ENCODE measurements at regions of chr7 and their contacts with region 1.

Region 1: DNA sequence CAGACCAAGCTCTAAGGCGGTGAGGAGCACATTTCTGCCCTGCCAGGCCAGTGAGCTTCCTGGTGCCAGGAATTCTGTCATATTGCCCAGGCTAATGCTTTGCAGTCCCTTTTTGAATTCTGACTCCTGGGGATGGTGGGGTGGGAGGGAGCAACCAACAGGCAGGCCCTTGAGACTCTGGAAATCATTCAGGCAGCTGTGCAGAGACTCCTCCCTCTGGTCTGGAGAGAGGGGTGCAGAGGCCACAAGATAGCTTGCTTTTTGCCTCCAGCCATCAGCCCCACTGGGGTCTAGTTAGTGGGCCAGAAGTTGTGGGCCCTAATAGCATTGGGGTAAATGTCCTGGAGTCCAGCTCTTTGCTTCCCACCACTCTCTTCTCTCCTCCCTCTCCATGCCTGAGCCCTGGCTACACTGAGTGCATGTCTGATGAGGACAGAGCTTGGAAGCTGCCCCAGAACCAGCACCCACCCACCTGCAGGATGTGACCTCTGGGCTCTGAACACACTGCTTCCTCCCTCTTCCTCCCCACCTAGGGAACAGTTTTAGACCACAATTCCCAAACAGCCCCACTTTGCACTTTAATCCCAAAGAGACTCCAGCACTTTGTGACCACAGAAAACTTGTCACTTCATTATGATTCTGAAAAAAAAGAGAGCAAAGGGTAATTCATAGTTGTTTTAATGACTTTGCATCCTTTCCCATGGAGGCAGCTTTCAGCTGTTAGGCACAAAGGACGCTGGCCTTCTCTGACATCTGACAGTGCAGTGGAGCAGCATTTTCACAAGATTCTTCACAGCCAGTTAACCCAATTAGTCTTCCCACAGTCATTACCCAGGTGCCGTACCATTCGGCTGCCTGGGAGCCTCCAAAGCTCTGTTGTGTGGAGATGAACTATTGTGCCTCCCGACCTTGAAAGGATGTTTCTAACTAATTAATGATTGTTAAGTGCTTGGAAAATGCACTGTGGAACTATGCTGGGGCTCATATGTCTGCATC is 262.5 kb downstream of the TRIL start:
- DNase-seq: no peak
- ATAC-seq: no peak
- H3K4me3 ChIP-seq: no peak overlapping the region
- H3K27ac ChIP-seq: no peak overlapping the region
- H3K4me1 ChIP-seq: no peaks in the 10 kb centered on the region
- H3K27me3 ChIP-seq: no peaks in the 10 kb centered on the region
- CTCF ChIP-seq: no peak

Region 2: DNA sequence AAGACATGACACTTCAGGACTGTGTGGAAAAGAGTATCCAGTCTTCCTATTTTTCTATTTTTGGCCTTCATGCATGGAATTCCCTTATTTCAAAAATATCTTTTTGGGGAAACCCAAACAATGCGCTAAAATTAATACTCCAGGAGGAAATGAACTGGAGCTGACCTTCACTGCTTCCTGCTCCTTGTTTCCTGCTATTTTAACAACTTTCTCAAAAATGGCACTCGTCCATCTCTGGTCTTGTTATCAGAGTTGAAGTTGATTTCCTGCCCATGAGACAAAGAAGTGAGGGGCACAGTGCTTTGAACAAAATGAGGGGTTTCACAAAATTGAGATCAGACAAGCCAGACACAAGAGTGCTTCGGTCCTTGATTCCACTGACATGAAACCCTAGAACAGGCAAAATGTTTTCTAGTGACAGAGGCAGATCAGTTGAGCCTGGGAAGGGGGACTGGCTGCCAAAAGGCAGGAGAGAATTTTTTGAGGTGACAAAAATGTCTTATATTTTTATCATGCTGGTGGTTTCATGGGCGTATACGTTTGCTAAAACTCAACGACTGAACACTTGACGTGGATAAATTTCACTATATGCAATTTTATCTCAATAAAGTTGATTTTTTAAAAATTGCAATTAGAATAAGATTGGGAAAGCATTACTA is 90.0 kb before region 1 on chr7:
- CTCF ChIA-PET with region 1: no interaction called
- POLR2A ChIA-PET with region 1: no interaction called
- intact Hi-C with region 1: no loop called
- DNase-seq: no peak
- ATAC-seq: no peak
- H3K4me3 ChIP-seq: no peak overlapping the region
- H3K27ac ChIP-seq: no peak overlapping the region
- H3K4me1 ChIP-seq: peaks cover 9% of the 10 kb centered on the region
- H3K27me3 ChIP-seq: no peaks in the 10 kb centered on the region
- CTCF ChIP-seq: no peak

Region 3: GRCh38 chr7:28658381-28658780 is 37.2 kb before region 1 on chr7:
- CTCF ChIA-PET with region 1: no interaction called
- POLR2A ChIA-PET with region 1: interaction called, 3 read pairs
- intact Hi-C with region 1: loop called (anchors 5 kb)
- DNase-seq: no peak
- ATAC-seq: no peak
- H3K4me3 ChIP-seq: no peak overlapping the region
- H3K27ac ChIP-seq: no peak overlapping the region
- H3K4me1 ChIP-seq: no peaks in the 10 kb centered on the region
- H3K27me3 ChIP-seq: no peaks in the 10 kb centered on the region
- CTCF ChIP-seq: no peak

Region 4: GRCh38 chr7:28674359-28674782 is 21.2 kb before region 1 on chr7:
- CTCF ChIA-PET with region 1: no interaction called
- POLR2A ChIA-PET with region 1: no interaction called
- intact Hi-C with region 1: no loop called
- DNase-seq: peak; percentile 81
- ATAC-seq: peak; percentile 95
- H3K4me3 ChIP-seq: peak overlapping the region; percentile 18; the same call in 1 of the 2 replicates
- H3K27ac ChIP-seq: peak overlapping the region; percentile 69
- H3K4me1 ChIP-seq: peaks cover 20% of the 10 kb centered on the region
- H3K27me3 ChIP-seq: no peaks in the 10 kb centered on the region
- CTCF ChIP-seq: no peak

Measured in PC-3 (cell line).